Activated CD8-positive, alpha-beta T cell treated with anti-CD3 and anti-CD28 coated beads for 36 hours (primary cell): ENCODE measurements at regions of chr17 and their contacts with region 1.

Region 1: GRCh38 chr17:3827124-3827773 is 18.8 kb downstream of the NCBP3 start:
- DNase-seq: peak; percentile 89
- ATAC-seq: no peak
- H3K4me3 Mint-ChIP-seq: no peak overlapping the region
- H3K27ac Mint-ChIP-seq: peak overlapping the region; percentile 25
- H3K4me1 Mint-ChIP-seq: peaks cover 9% of the 10 kb centered on the region
- H3K27me3 Mint-ChIP-seq: no peaks in the 10 kb centered on the region
- CTCF ChIP-seq: peak; percentile 97

Region 2: DNA sequence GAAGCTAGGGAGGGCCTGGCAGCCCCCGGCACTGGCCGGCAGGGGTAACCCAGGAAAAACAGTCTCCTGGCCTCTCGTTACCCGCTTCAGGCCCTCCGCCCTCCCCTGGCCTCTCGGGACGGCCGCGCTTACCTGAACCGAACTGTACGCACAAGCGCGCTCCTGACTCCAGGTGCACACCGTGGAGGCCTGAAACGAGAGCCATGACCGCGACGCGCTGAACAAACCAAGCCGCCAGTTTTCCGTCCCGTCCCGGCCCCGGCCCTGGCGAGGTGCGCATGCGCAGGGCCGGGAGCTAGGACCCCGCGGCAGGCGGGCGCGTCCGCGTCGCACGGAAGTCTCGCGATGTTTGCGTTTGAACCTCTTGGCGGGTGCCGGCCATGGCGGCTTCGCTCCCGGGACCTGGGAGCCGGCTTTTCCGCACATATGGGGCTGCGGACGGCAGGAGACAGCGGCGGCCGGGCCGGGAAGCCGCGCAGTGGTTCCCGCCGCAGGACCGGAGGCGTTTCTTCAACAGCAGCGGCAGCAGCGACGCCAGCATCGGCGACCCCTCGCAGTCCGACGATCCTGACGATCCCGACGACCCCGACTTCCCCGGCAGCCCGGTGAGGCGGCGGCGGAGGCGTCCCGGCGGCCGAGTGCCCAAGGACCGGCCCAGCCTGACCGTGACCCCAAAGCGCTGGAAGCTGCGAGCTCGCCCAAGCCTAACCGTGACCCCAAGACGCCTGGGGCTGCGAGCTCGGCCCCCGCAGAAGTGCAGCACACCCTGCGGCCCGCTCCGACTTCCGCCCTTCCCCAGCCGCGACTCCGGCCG is 103.5 kb before region 1 on chr17 and contains the start of gene HASPIN:
- CTCF ChIA-PET with region 1: interaction called, 20 read pairs
- POLR2A ChIA-PET with region 1: no interaction called
- intact Hi-C with region 1: no loop called
- DNase-seq: peak; percentile 93
- ATAC-seq: peak; percentile 91
- H3K4me3 Mint-ChIP-seq: peak within 1 kb of the TSS; percentile 81
- H3K27ac Mint-ChIP-seq: peak within 1 kb of the TSS; percentile 92
- H3K4me1 Mint-ChIP-seq: peaks cover 54% of the 10 kb centered on the region
- H3K27me3 Mint-ChIP-seq: no peaks in the 10 kb centered on the region
- CTCF ChIP-seq: peak; percentile 42
- total RNA-seq, gene HASPIN: 20.7 to 21.3 TPM

Region 3: GRCh38 chr17:3754458-3755334 is 72.6 kb before region 1 on chr17:
- CTCF ChIA-PET with region 1: interaction called, 24 read pairs
- POLR2A ChIA-PET with region 1: no interaction called
- intact Hi-C with region 1: no loop called
- DNase-seq: peak; percentile 87
- ATAC-seq: peak; percentile 94
- H3K4me3 Mint-ChIP-seq: no peak overlapping the region
- H3K27ac Mint-ChIP-seq: no peak overlapping the region
- H3K4me1 Mint-ChIP-seq: peaks cover 28% of the 10 kb centered on the region
- H3K27me3 Mint-ChIP-seq: no peaks in the 10 kb centered on the region
- CTCF ChIP-seq: no peak

Region 4: DNA sequence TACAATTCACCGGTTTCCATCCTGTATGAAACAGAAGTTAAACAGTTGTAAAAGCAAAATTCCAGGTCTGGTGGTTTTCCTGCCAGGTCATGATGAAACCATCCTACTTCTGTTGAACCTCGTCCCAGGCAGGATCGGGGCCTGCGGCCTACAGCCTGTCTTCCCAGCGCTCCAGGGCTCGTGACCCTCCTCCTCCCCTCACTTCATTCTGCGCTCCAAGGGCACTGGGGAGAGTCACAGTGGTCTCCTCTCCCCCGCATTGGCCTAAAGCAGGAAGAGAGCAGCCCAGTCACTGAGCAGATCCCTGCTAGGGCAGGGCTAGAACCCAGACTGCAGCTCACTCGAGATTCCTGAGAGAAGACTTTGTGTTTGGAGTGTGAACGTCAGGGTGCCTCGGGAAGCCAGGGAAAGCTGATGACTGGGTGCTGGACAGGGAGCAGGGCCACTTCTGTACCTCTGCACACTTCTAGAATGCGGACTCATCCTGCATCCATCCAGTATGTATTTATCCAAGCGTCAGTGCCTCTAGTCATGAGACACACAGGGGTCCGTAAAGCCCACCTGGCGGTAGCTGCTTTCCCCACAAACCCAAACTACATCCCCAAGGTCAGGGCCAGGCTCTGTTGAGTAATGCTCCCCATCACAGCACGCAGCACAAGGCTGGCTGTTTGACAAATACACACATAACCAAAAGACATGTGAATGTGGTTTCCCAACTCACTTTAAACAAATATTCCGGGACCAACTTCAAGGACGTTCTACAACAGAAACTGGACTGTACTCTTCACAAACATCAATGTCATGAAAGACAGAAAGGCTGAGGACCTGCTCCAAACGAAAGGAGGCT is 24.6 kb before region 1 on chr17:
- CTCF ChIA-PET with region 1: interaction called, 36 read pairs
- POLR2A ChIA-PET with region 1: interaction called, 6 read pairs
- intact Hi-C with region 1: no loop called
- DNase-seq: no peak
- ATAC-seq: no peak
- H3K4me3 Mint-ChIP-seq: no peak overlapping the region
- H3K27ac Mint-ChIP-seq: no peak overlapping the region
- H3K4me1 Mint-ChIP-seq: peaks cover 37% of the 10 kb centered on the region
- H3K27me3 Mint-ChIP-seq: no peaks in the 10 kb centered on the region
- CTCF ChIP-seq: no peak

Region 5: GRCh38 chr17:3845621-3846441 is 18.6 kb after region 1 on chr17 and contains the start of gene NCBP3:
- CTCF ChIA-PET with region 1: interaction called, 77 read pairs
- POLR2A ChIA-PET with region 1: interaction called, 5 read pairs
- intact Hi-C with region 1: no loop called
- DNase-seq: peak; percentile 90
- ATAC-seq: peak; percentile 94
- H3K4me3 Mint-ChIP-seq: peak within 1 kb of the TSS; percentile 96
- H3K27ac Mint-ChIP-seq: peak within 1 kb of the TSS; percentile 93
- H3K4me1 Mint-ChIP-seq: peaks cover 25% of the 10 kb centered on the region
- H3K27me3 Mint-ChIP-seq: peaks cover 2% of the 10 kb centered on the region
- CTCF ChIP-seq: peak; percentile 87
- total RNA-seq, gene NCBP3: 34.7 to 41.1 TPM